Mammary epithelial cell (primary cell): ENCODE measurements at regions of chr1 and their contacts with region 1.

Region 1: DNA sequence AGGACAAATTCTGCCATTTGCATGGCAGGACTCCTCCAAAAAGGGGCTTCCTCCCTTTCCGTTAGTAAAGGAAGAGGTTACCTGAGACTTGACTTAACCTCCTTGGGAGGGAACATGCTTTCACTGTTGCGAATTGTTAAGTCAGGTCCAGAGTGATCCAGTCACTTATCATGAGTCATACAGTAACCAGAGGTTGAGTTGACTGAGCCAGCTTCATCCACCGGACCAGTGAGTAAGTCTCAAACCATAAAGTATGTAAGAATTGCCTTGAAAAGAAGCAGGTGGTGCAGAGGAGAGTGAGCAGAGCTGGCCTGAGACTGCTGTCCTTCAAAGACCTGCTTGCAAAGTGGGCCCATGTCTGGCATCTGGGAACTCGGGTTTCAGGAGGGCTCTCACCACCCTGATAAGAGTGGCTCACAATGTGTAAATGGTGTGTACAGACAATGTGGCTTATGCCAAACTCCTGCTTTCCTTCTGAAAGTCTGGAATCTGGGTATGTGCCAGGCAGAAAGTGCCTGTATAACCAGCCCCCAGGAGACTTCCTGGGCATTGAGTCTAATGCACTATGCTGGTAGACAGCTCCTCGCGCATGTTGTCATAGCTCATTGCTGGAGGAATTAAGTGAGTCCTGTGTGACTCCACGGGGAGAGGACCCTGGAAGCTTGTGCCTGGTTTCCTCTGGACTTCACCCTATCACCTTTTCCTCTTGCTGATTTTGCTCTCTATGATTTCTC is 84.3 kb upstream of the KLHDC7A start:
- DNase-seq: peak; percentile 9
- H3K4me3 ChIP-seq: no peak overlapping the region
- H3K27ac ChIP-seq: no peak overlapping the region
- H3K4me1 ChIP-seq: no peaks in the 10 kb centered on the region
- H3K27me3 ChIP-seq: no peaks in the 10 kb centered on the region
- CTCF ChIP-seq: no peak

Region 2: DNA sequence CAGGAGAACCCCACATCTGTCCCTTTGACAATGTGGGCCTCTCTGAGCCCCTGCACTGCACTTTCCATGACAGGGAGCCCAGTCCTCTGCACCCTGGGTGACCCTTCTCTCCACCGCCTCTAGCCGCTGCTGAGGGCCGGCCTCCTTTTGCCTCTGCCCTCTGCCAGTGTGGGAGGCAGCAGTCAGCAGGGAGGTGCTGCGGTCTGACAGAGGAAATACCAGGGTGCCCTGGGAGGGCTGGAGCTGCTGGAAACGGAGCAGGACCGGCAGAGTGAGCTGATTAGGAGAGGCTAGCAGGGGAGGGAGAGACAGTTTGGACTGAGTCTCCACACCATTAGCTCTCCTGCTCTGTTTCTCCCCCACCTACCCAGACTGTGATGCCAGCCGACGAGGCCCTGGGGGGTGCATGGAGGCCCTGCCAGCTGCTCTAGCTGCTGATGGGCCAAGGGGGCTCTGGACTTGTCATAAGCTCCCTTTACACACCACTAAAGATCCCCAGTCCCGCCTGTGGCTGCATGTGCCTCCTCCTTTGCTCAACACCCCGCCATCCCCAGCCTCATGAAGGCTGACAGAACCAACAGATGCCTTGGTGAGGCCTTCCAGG is 86.8 kb before region 1 on chr1:
- CTCF ChIA-PET with region 1: no interaction called
- dilution Hi-C with region 1: loop called (anchors 5 kb)
- in situ Hi-C with region 1: no loop called
- intact Hi-C with region 1: no loop called
- DNase-seq: no peak
- H3K4me3 ChIP-seq: no peak overlapping the region
- H3K27ac ChIP-seq: no peak overlapping the region
- H3K4me1 ChIP-seq: no peaks in the 10 kb centered on the region
- H3K27me3 ChIP-seq: no peaks in the 10 kb centered on the region
- CTCF ChIP-seq: no peak

Region 3: DNA sequence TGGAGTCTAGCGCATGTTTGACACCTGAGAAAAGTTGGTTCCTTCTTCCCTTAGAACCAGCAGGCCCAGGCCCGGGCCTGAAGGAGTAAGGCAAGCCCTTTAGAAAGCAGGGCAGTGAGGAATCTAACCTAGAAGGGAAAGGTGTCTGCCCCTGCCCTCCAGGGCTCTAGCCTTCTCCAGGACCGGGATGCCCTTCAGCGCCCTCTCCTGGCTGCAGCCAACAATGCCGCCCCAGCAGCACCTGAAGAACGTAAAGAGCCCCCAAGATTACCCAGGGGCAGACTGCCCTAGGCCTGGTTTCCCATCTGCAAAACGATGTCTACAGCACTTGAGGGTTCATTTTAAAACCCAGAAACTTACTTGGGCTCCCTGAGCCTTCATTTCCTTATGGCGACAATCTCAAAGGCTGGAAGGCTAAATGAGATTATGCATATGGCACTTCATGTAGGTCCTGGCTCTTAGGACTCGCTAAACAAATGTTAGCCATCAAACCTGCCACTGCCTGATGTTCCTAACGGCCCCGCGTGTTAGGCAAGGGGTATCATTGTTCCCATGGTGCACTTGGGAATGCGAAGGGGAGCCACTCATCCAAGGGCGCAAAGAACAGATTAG is 22.4 kb before region 1 on chr1:
- CTCF ChIA-PET with region 1: no interaction called
- dilution Hi-C with region 1: no loop called
- in situ Hi-C with region 1: no loop called
- intact Hi-C with region 1: no loop called
- DNase-seq: no peak
- H3K4me3 ChIP-seq: no peak overlapping the region
- H3K27ac ChIP-seq: no peak overlapping the region
- H3K4me1 ChIP-seq: no peaks in the 10 kb centered on the region
- H3K27me3 ChIP-seq: no peaks in the 10 kb centered on the region
- CTCF ChIP-seq: no peak

Region 4: DNA sequence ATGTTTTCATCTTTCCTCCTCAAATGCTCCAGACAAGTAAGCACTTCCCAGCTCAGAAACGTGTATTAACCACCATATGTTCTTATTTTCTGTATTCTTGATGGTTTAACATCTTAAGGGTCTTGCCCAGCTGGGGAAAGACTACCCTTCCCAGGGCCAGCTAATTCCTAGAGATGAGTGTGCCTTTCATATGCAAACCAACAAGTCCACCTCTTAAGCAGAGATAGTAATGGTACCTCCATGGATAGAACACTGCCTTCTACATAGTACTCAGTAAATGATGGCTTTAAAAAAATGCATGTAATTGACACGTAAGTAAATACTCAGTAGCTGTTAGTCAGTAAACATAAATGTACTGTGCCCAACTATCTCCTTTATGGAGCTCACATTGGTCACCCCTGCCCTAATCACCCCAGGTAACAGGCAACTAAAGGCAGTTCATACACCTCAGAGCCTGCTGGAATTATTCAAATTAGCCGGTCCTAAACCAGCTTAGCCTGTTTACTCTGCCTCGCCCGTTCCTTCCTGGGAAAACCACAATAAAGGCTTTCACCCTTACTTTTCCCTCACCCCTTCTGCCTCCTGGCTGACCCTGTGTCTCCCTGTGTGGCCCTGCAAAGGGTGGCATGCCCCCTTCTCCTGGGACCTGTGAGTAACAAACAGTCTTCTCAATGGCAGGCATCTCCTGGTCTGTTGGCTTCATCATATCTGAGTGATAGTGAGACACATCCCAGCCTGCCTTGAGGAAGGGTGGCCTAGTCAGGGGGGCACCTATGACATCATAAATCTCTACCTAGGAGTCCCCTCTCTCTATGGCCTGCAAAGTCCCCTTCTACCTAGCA is 44.2 kb after region 1 on chr1:
- CTCF ChIA-PET with region 1: no interaction called
- dilution Hi-C with region 1: loop called (anchors 5 kb)
- in situ Hi-C with region 1: no loop called
- intact Hi-C with region 1: no loop called
- DNase-seq: no peak
- H3K4me3 ChIP-seq: no peak overlapping the region
- H3K27ac ChIP-seq: no peak overlapping the region
- H3K4me1 ChIP-seq: no peaks in the 10 kb centered on the region
- H3K27me3 ChIP-seq: no peaks in the 10 kb centered on the region
- CTCF ChIP-seq: no peak